Activated CD4-positive, alpha-beta T cell treated with anti-CD3 and anti-CD28 coated beads, Interleukin-2, amount 10 ng/mL, durations not matched to agents 24 days and 14 days (primary cell): ENCODE measurements at regions of chr12 and their contacts with region 1.

Region 1: DNA sequence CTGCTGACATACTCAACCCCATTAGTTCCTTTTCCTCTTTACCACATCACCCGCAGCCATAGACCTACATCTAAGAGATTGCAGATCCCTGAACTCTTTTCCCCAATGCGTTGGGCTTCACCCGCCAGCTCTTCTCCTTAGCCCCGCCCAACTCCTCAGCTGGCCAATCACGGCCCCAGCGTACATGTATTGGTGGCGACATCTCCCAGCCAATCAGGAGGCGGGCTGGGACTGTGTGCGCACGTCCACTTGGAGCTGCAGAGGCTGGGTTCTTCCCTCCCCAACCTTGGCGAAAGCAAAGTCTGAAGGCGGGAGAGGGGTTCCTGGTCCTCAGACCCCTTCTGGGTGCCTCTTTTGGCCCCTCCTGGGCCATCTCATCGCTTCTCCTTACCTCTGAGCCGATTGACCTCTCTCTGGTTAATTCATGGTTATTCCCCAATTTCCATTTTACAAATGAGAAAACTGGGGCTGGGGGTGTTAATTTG is 11.0 kb downstream of the PDE1B start:
- DNase-seq: peak; percentile 96
- H3K4me3 Mint-ChIP-seq: peak overlapping the region; percentile 82
- H3K27ac Mint-ChIP-seq: peak overlapping the region; percentile 92
- H3K4me1 Mint-ChIP-seq: peaks cover 27% of the 10 kb centered on the region
- H3K27me3 Mint-ChIP-seq: no peaks in the 10 kb centered on the region

Region 2: DNA sequence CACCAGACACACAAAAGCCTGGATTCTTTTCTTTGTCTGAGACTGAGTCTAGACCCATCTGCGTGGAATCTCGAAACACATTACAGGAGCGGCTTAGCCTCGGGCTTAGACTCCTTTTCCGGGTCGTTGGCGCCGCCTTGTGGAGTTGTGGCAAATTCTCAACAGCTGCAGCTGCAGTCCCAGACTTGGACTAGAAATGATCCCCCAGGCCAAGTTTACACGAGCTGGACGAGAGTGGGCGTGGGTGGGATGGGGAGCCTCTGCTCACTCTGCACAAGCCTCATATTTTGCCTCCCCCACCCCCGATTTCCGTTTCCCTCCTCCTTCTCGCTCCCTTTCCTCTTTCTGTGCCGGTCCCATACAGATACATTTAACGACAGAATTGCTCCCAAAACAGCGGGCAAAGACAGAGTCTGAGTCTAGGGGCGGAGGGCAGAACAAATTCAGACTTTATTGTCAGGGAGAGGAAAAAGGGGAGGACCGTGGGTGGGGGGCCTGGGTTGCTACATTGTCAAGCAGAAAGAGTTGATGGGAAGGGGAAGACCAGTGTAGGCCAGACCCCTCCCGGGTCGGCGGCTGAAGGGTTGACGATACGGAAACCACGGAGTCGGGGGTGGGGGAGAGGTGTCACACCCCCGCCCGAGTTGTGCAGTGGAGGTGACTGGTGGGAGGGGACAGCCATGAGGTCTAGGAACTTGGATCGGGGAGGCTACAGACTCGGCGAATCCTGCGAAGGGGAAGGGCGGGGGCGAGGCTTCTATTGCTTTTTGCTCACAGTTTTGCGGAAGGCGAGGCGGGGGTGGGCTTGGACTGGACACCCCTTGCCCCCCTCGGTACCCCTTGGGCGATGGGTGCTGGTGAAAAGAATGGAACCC is 191.5 kb before region 1 on chr12:
- intact Hi-C with region 1: no loop called
- DNase-seq: peak; percentile 96
- H3K4me3 Mint-ChIP-seq: peak overlapping the region; percentile 65
- H3K27ac Mint-ChIP-seq: peak overlapping the region; percentile 38
- H3K4me1 Mint-ChIP-seq: peaks cover 41% of the 10 kb centered on the region
- H3K27me3 Mint-ChIP-seq: peaks cover 8% of the 10 kb centered on the region

Region 3: DNA sequence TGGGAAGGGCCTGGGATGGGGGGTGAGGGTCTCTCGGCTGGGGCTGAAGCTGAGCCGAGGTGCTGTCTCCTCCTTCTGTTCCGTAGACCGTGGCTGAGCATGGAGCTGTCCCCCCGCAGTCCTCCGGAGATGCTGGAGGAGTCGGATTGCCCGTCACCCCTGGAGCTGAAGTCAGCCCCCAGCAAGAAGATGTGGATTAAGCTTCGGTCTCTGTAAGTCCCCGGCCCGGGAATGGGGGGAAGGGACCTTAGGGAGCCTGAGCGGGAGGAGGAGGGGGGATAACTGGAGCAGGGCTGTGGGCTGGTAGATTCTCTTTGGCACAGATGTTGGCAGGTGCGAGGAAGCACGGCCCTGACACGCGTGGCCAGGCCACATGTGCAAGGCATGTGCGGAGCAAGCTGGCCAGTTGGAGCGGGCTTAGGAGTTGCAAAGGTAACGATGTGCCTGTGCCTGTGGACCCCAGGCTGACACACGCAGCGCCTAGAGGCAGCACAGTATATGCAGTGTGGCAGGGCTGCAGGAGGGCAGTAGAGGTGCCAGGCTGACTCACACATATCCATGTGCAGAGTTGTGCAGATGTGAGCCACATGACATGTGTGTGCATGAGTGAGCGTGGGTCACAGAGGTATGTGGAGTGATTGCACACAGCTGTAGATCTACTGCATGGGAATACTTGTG is 10.5 kb before region 1 on chr12:
- intact Hi-C with region 1: loop called (anchors 1 kb)
- DNase-seq: peak; percentile 63
- H3K4me3 Mint-ChIP-seq: peak overlapping the region; percentile 78
- H3K27ac Mint-ChIP-seq: peak overlapping the region; percentile 78
- H3K4me1 Mint-ChIP-seq: peaks cover 39% of the 10 kb centered on the region
- H3K27me3 Mint-ChIP-seq: peaks cover 15% of the 10 kb centered on the region